ENCODE measurements at regions of chr3 and their contacts with region 1.

Region 1: GRCh38 chr3:193040836-193041672 is 123.4 kb upstream of the MB21D2 start:
- DNase-seq: no peak
- H3K4me3 ChIP-seq: no peak overlapping the region
- H3K27ac ChIP-seq: no peak overlapping the region
- H3K4me1 ChIP-seq: no peaks in the 10 kb centered on the region
- H3K27me3 ChIP-seq: no peaks in the 10 kb centered on the region
- CTCF ChIP-seq: peak in 2 of 3 experiments; percentile 45 to 54; a peak in 2 of 4 replicates
- EP300 ChIP-seq: no peak
- POLR2A ChIP-seq: no peak
- RAD21 ChIP-seq: peak; percentile 82 to 83

Region 2: GRCh38 chr3:192917404-192918274 is 123.4 kb before region 1 on chr3 and contains the start of gene MB21D2:
- CTCF ChIA-PET with region 1: interaction called, 11 read pairs
- POLR2A ChIA-PET with region 1: no interaction called
- DNase-seq: peak in 1 of 2 experiments; percentile 69
- H3K4me3 ChIP-seq: peak within 1 kb of the TSS; percentile 89 to 98 (median 92)
- H3K27ac ChIP-seq: peak within 1 kb of the TSS; percentile 88
- H3K4me1 ChIP-seq: peaks cover 3 to 26% (median 16%) of the 10 kb centered on the region in 4 experiments; a peak in 5 of 7 replicates
- H3K27me3 ChIP-seq: no peaks in the 10 kb centered on the region; a peak in 1 of 7 replicates
- CTCF ChIP-seq: no peak
- EP300 ChIP-seq: no peak
- POLR2A ChIP-seq: peak; percentile 43 to 67
- RAD21 ChIP-seq: no peak
- total RNA-seq, gene MB21D2: 20.7 and 21.0 TPM in 2 replicates

Region 3: GRCh38 chr3:193016437-193016901 is 24.6 kb before region 1 on chr3:
- CTCF ChIA-PET with region 1: interaction called, 18 read pairs
- POLR2A ChIA-PET with region 1: no interaction called
- DNase-seq: peak in 1 of 2 experiments; percentile 54
- H3K4me3 ChIP-seq: peak overlapping the region in 1 of 4 experiments; percentile 30; a peak in 1 of 8 replicates
- H3K27ac ChIP-seq: no peak overlapping the region
- H3K4me1 ChIP-seq: peaks cover 0 to 6% (median 3%) of the 10 kb centered on the region in 4 experiments; a peak in 4 of 7 replicates
- H3K27me3 ChIP-seq: no peaks in the 10 kb centered on the region
- CTCF ChIP-seq: no peak
- EP300 ChIP-seq: no peak
- POLR2A ChIP-seq: no peak
- RAD21 ChIP-seq: no peak

Region 4: DNA sequence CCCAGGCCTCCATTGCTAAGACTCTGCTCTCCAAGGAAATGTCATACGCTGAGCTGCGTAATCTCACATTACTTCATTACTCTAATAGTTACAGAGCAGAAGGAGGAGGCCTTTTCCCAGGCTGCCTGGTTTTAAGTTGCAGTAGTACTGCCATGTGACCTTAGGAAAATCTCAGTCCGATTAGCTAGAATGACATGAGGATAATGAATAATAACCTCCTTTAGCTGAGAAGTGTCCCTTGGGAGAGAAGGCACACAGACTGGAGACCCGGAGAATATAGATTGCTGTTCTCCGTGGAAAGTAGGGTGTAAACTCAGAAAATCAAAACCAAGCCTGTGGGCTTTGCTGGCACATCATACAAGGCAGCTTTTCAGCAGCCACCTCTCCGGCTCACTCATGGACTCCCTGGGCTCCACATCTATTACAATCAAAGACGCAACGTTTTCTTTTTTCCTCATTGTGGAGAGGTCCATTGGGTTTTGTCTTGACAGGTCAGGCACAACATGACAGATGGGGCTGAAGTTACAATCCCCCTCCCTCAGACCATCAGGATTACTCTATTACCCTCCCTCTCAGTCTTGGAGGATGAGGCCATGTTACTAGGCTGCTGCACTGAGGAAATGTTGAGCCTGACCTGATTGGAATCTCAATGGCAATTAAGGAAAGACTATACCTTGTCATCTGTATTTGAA is 11.4 kb after region 1 on chr3:
- CTCF ChIA-PET with region 1: interaction called, 17 read pairs
- POLR2A ChIA-PET with region 1: no interaction called
- DNase-seq: no peak
- H3K4me3 ChIP-seq: no peak overlapping the region
- H3K27ac ChIP-seq: no peak overlapping the region; the same call in 1 of the 2 replicates
- H3K4me1 ChIP-seq: no peaks in the 10 kb centered on the region; a peak in 1 of 7 replicates
- H3K27me3 ChIP-seq: no peaks in the 10 kb centered on the region
- CTCF ChIP-seq: no peak
- EP300 ChIP-seq: no peak
- POLR2A ChIP-seq: no peak
- RAD21 ChIP-seq: no peak

Measured in H1 (cell line).